Activated B cell treated with CpG ODN at 0.5 μM for 24 hours (primary cell): ENCODE measurements at regions of chr1 and their contacts with region 1.

Region 1: GRCh38 chr1:22431965-22432364 is 19.7 kb upstream of the ZBTB40 start:
- DNase-seq: no peak
- ATAC-seq: no peak
- H3K4me3 Mint-ChIP-seq: no peak overlapping the region
- H3K27ac Mint-ChIP-seq: no peak overlapping the region
- H3K4me1 Mint-ChIP-seq: peaks cover 6% of the 10 kb centered on the region
- H3K27me3 Mint-ChIP-seq: peaks cover 3% of the 10 kb centered on the region
- CTCF ChIP-seq: no peak

Region 2: GRCh38 chr1:22451702-22452474 is 19.9 kb after region 1 on chr1 and contains the start of gene ZBTB40:
- CTCF ChIA-PET with region 1: no interaction called
- POLR2A ChIA-PET with region 1: no interaction called
- intact Hi-C with region 1: loop called (anchors 1 kb)
- DNase-seq: peak; percentile 92
- ATAC-seq: peak; percentile 94
- H3K4me3 Mint-ChIP-seq: peak within 1 kb of the TSS; percentile 90
- H3K27ac Mint-ChIP-seq: peak within 1 kb of the TSS; percentile 82
- H3K4me1 Mint-ChIP-seq: peaks cover 34% of the 10 kb centered on the region
- H3K27me3 Mint-ChIP-seq: no peaks in the 10 kb centered on the region
- CTCF ChIP-seq: no peak
- total RNA-seq, gene ZBTB40: 32.5 and 36.2 TPM in 2 replicates

Region 3: GRCh38 chr1:23132033-23132432 is 700.1 kb after region 1 on chr1:
- CTCF ChIA-PET with region 1: no interaction called
- POLR2A ChIA-PET with region 1: no interaction called
- intact Hi-C with region 1: no loop called
- DNase-seq: no peak
- ATAC-seq: no peak
- H3K4me3 Mint-ChIP-seq: no peak overlapping the region
- H3K27ac Mint-ChIP-seq: no peak overlapping the region
- H3K4me1 Mint-ChIP-seq: no peaks in the 10 kb centered on the region
- H3K27me3 Mint-ChIP-seq: no peaks in the 10 kb centered on the region
- CTCF ChIP-seq: no peak